OCI-LY7 (cell line): ENCODE measurements at regions of chr1 and their contacts with region 1.

Region 1: DNA sequence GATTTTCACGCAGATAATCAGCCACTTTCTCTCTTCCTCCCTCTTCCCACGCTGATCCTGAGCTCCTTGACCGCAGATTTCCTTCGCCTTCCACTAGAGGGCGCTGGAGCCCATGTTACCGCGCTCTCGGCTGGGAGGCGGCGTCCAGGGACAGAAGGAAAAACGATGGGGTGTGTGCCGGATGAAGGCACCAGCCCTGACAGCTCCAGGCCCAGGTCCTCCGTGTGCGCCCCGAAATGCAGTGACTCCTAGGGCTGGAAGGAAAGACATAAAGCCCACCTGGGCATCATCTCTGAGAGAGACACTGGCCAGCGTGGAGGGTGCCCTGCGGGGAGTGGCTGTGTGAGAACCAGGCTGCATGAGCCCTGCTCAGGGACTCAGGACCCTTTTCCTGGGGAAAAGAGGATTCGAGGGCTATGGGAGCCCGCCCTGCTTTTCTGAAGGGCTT is 44.9 kb upstream of the CYP2J2 start:
- DNase-seq: peak; percentile 20
- H3K4me3 ChIP-seq: no peak overlapping the region
- H3K27ac ChIP-seq: no peak overlapping the region
- H3K4me1 ChIP-seq: no peaks in the 10 kb centered on the region
- CTCF ChIP-seq: peak; percentile 87

Region 2: DNA sequence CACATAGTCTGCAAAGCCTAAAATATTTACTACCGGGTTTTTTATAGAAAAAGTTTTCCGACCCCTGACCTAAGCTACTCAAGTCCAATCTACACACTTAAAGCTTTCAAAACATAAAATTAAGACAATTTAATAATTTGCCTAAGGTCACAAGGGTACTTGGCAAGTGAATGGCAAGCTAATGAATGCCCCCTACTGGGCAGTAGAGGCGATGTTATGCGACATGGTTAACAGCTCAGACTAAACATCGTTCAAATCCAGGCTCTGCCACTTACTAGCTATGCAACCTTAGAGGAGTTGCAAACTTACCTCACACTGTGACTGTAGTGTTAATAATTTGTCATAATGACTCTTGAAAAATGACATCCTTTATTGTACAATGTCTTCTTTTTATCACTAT is 793.7 kb after region 1 on chr1:
- CTCF ChIA-PET with region 1: no interaction called
- POLR2A ChIA-PET with region 1: no interaction called
- intact Hi-C with region 1: loop called (anchors 5 kb)
- DNase-seq: peak; percentile 32
- H3K4me3 ChIP-seq: no peak overlapping the region
- H3K27ac ChIP-seq: no peak overlapping the region
- H3K4me1 ChIP-seq: no peaks in the 10 kb centered on the region
- CTCF ChIP-seq: peak; percentile 83